GM10248 (cell line): ENCODE measurements at regions of chr15 and their contacts with region 1.

Region 1: GRCh38 chr15:72229076-72229945 is 1.7 kb downstream of the PKM start:
- DNase-seq: no peak
- CTCF ChIP-seq: no peak

Region 2: DNA sequence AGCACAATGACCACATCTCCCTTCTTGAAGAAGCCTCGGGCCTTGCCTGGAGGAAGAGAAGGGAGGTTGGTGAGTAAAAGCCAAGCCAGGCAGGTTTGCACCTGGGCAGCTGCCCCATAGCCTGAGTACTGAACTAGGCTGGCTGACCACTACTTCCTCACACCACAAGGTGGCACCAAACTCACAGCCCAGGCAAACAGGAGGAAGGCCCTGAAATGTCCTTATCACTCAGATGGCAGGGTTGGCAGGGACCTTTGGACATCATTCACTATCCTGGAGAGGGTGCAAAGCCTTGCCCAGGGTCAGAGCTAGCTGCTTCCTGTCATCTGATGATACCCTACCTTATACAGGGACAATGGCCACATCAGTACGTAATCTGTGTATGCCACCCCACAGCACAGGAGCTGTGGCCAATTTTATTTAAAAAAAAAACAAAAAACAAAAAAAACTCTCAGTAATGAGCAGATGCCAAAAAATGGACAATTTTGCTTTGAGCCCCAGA is 29.5 kb before region 1 on chr15:
- CTCF ChIA-PET with region 1: interaction called, 22 read pairs
- POLR2A ChIA-PET with region 1: interaction called, 8 read pairs
- DNase-seq: peak; percentile 79
- CTCF ChIP-seq: peak; percentile 96

Region 3: GRCh38 chr15:72206677-72207000 is 22.7 kb before region 1 on chr15:
- CTCF ChIA-PET with region 1: interaction called, 22 read pairs
- POLR2A ChIA-PET with region 1: interaction called, 8 read pairs
- DNase-seq: no peak
- CTCF ChIP-seq: no peak

Region 4: DNA sequence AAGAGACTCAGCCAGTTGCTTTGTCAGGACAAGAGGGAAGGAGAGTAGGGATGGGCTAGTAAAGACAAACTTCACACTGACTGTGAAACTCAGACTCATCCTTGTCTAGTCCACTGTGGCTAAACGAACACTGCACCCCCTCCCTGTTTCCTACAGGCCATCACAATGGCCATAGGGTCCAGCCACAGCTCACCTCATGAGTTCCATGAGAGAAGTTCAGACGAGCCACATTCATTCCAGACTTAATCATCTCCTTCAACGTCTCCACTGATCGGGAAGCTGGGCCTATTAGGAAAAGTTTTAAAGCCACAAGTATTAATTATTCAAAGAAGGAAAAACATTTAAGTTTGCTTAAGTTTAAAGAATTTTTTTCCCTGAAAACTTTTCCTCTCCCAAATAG is 12.1 kb before region 1 on chr15:
- CTCF ChIA-PET with region 1: interaction called, 28 read pairs
- POLR2A ChIA-PET with region 1: interaction called, 9 read pairs
- DNase-seq: no peak
- CTCF ChIP-seq: no peak

Region 5: DNA sequence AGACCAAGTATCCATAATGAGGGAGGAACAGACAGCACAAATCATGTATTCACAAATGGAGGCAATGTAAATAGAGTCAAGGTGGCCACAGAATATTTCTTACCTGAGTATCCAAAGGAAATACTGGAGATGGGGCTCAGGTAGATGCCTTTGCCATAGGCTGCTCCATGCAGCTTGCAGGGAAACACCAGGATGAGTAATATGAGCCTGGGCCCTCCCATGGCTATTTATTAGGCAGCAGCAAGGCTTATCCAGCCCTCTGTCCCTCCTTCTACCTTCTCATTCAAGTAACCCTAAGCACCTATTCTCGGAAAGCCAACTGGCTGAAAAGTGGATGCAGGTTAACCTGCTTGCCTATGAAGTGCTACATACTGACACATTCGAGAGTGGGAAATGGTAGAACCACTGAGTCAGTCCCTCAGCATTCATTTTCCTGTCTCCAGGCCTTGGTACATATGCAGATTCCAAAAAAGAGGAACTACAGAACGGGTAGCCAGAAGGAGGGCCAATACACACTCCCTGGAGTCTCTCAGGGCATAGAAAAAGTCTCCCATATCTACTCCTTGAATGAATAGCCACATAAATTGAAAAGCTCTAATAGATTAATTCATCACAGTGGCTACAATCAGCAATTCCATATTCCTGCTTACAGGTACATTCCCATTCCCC is 20.0 kb after region 1 on chr15:
- CTCF ChIA-PET with region 1: interaction called, 10 read pairs
- POLR2A ChIA-PET with region 1: no interaction called
- DNase-seq: no peak
- CTCF ChIP-seq: no peak

Region 6: GRCh38 chr15:72272213-72273002 is 43.1 kb after region 1 on chr15 and contains the start of gene PARP6:
- CTCF ChIA-PET with region 1: interaction called, 12 read pairs
- POLR2A ChIA-PET with region 1: no interaction called
- DNase-seq: peak; percentile 98
- CTCF ChIP-seq: peak; percentile 74